ENCODE measurements at regions of chr3 and their contacts with region 1.

Region 1: DNA sequence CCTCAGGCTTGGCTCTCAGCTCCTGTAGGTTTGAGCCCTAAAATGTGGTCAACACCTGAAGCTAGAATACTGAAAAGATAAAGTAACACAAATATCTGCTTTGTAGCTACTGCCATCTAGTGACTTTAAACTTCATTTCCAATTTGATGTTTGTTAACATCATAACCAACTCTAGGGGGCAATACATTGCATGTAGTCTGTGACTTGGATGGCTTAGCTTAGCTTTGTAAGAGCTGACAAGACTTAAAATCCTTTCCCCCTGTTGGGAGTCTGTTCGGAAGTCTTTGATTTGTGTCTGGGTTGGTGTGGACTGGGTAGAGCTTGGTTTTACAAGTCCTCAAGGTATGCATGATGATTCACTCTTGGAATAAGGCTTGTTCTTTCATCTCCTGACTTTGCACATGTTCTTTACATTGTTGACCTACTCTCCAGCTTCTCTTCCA is 51.7 kb downstream of the SCN11A start:
- DNase-seq: peak; percentile 80
- ATAC-seq: peak; percentile 94
- H3K4me3 ChIP-seq: no peak overlapping the region
- H3K27ac ChIP-seq: no peak overlapping the region
- H3K4me1 ChIP-seq: no peaks in the 10 kb centered on the region
- H3K27me3 ChIP-seq: 0 out of 2 replicates have a peak, but pooled peaks cover 4% of the 10 kb centered on the region
- CTCF ChIP-seq: peak; percentile 83 to 99 (median 95)
- POLR2A ChIP-seq: no peak
- RAD21 ChIP-seq: peak; percentile 88

Region 2: DNA sequence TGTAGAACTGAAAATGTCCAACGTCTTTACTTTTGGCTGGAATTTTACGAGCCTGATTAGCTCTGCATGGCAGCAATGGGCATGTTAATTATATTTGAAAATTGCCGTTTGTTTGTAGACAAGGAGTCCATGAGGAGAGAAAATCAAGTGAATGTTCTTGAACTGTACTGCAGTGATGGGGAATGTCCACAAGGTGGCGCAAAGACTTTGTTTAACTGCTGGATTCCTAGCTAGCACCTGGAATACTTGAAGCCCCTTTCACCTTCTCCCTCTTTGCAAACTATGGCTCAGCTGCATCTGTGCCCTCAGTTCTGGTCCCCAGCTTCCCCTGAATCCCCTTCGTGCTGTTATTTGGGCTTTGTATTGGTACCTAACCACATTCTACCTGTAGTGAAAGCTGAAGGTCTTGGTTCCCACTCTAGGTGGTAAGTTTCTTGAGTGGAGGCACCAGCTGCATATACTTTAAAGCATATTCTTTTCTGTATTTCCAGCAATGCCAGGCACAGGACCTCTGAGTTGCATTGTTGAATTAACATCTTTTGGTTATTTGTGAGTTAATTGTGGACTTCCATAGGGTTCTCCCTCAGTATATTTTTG is 478.5 kb before region 1 on chr3:
- CTCF ChIA-PET with region 1: interaction called, 30 read pairs
- POLR2A ChIA-PET with region 1: no interaction called
- RAD21 ChIA-PET with region 1: no interaction called
- intact Hi-C with region 1: loop called (anchors 10 kb)
- DNase-seq: peak; percentile 62
- ATAC-seq: peak; percentile 78
- H3K4me3 ChIP-seq: no peak overlapping the region
- H3K27ac ChIP-seq: no peak overlapping the region
- H3K4me1 ChIP-seq: no peaks in the 10 kb centered on the region
- H3K27me3 ChIP-seq: no peaks in the 10 kb centered on the region
- CTCF ChIP-seq: peak; percentile 81 to 91 (median 85)
- POLR2A ChIP-seq: no peak
- RAD21 ChIP-seq: peak; percentile 81

Region 3: GRCh38 chr3:38738630-38739395 is 261.2 kb before region 1 on chr3:
- CTCF ChIA-PET with region 1: interaction called, 19 read pairs
- POLR2A ChIA-PET with region 1: no interaction called
- RAD21 ChIA-PET with region 1: interaction called in 1 of 2 experiments, 5 read pairs
- intact Hi-C with region 1: loop called (anchors 1 kb)
- DNase-seq: peak; percentile 47
- ATAC-seq: peak; percentile 94
- H3K4me3 ChIP-seq: no peak overlapping the region
- H3K27ac ChIP-seq: no peak overlapping the region
- H3K4me1 ChIP-seq: no peaks in the 10 kb centered on the region
- H3K27me3 ChIP-seq: peaks cover 10% of the 10 kb centered on the region; the same call in 1 of the 2 replicates
- CTCF ChIP-seq: peak; percentile 87 to 94 (median 94)
- POLR2A ChIP-seq: no peak
- RAD21 ChIP-seq: peak; percentile 79

Region 4: DNA sequence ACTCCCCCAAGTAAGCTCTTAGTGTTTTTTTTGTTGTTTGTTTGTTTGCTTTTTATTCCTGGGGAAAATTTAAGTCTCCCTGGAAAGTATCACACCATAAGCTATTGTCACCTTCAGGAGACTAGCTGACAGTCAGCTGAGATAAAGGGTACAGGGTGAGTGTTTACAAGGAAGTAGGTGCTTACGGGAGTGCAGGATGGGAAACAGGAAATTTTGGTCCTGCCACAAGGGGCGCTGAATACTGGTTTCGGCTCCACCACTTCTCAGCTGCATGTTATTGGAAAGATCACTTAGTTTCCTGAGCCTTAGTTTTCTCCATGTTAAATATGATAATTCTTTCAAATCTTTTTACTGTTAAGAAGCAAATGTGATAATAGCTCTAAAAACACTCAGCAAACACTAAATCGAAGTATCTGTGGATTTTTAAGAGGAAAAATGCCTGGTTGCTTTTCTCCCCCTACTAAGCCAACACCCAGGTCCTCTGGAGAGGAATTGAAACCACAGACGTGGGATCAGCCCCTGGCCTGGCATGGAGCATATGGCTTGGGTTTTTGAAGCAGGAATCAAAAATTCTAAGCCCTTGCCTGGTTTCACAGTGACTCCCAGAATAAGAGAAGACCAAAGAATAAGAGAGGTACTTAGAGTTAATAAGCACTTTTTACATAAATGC is 38.9 kb before region 1 on chr3:
- CTCF ChIA-PET with region 1: interaction called, 15 read pairs
- POLR2A ChIA-PET with region 1: no interaction called
- RAD21 ChIA-PET with region 1: no interaction called
- intact Hi-C with region 1: no loop called
- DNase-seq: peak; percentile 58
- ATAC-seq: peak; percentile 98
- H3K4me3 ChIP-seq: 0 out of 4 replicates have a peak overlapping the region, but pooled peaks of 1 of the 2 experiments have one; percentile 16
- H3K27ac ChIP-seq: no peak overlapping the region
- H3K4me1 ChIP-seq: peaks cover 0 to 4% of the 10 kb centered on the region in 2 experiments; a peak in 2 of 4 replicates
- H3K27me3 ChIP-seq: no peaks in the 10 kb centered on the region
- CTCF ChIP-seq: peak; percentile 38 to 90 (median 88); a peak in 5 of 6 replicates
- POLR2A ChIP-seq: no peak
- RAD21 ChIP-seq: peak; percentile 28; the same call in 1 of the 2 replicates

Region 5: DNA sequence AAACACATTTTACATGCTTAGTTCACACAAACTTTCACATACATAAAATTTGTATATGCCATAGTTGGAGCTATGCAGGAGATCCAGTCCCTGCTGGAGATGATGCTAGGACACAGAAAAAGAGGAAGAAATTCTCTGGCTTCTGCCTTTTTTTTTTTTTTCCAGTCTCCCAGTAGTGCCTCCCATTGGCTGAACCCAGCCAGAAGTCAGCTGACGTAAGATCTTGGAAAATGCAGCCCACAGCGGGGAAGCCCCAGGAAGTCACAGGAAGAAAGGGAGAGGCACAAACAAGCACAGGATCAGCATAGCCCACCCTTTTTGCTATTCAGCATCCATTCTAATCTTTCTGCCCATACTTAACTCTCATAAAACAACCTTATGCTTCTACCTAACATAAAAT is 13.3 kb after region 1 on chr3:
- CTCF ChIA-PET with region 1: interaction called, 12 read pairs
- POLR2A ChIA-PET with region 1: no interaction called
- RAD21 ChIA-PET with region 1: no interaction called
- intact Hi-C with region 1: no loop called
- DNase-seq: no peak
- ATAC-seq: no peak
- H3K4me3 ChIP-seq: no peak overlapping the region
- H3K27ac ChIP-seq: no peak overlapping the region
- H3K4me1 ChIP-seq: no peaks in the 10 kb centered on the region
- H3K27me3 ChIP-seq: peaks cover 14% of the 10 kb centered on the region; the same call in 1 of the 2 replicates
- CTCF ChIP-seq: no peak
- POLR2A ChIP-seq: no peak
- RAD21 ChIP-seq: no peak